PC-3 (cell line): ENCODE measurements at regions of chr13 and their contacts with region 1.

Region 1: DNA sequence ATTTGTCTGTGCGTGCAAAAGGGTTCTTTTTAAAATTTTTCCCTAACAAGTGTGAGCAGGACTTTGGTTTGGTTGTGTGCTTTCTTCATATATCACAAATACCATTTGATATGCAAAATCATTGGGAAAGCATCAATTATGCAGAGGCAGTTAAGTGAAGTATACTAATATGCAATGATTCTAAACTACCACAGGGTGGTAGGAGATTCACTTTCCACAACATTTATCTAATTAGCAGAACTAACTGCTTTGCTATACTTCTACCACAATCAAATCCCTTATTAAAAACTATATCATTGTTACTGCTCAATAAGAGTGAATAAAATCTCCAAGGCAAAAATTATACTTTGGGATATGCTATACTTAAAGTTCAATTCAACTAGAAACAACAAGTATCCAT is 2738.9 kb upstream of the PCDH20 start:
- DNase-seq: peak; percentile 28
- ATAC-seq: no peak
- H3K4me3 ChIP-seq: no peak overlapping the region
- H3K27ac ChIP-seq: no peak overlapping the region
- H3K4me1 ChIP-seq: peaks cover 4% of the 10 kb centered on the region; the same call in 1 of the 2 replicates
- H3K27me3 ChIP-seq: no peaks in the 10 kb centered on the region
- CTCF ChIP-seq: peak; percentile 53

Region 2: GRCh38 chr13:64075543-64076271 is 78.8 kb before region 1 on chr13:
- CTCF ChIA-PET with region 1: no interaction called
- POLR2A ChIA-PET with region 1: no interaction called
- intact Hi-C with region 1: no loop called
- DNase-seq: no peak
- ATAC-seq: no peak
- H3K4me3 ChIP-seq: no peak overlapping the region
- H3K27ac ChIP-seq: no peak overlapping the region
- H3K4me1 ChIP-seq: no peaks in the 10 kb centered on the region
- H3K27me3 ChIP-seq: no peaks in the 10 kb centered on the region
- CTCF ChIP-seq: no peak

Region 3: DNA sequence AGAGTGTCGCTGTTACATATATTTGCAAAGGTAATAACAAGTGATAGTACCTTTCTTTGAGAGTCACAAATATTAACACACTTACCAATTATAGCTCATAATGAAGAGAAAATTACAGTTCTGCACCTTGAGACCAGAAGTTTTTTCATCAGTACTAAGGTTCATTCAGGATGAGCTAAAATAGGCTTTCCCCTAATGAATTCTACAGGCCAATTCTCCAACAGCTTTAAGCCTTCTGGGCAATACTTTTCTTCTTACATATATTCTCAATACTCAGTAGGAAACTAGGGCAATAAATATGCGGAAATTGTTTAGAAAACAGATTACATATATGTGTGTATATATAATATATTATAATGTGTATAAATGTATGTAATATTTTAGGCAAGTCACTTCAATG is 66.0 kb before region 1 on chr13:
- CTCF ChIA-PET with region 1: no interaction called
- POLR2A ChIA-PET with region 1: no interaction called
- intact Hi-C with region 1: no loop called
- DNase-seq: no peak
- ATAC-seq: no peak
- H3K4me3 ChIP-seq: no peak overlapping the region
- H3K27ac ChIP-seq: no peak overlapping the region
- H3K4me1 ChIP-seq: no peaks in the 10 kb centered on the region
- H3K27me3 ChIP-seq: no peaks in the 10 kb centered on the region
- CTCF ChIP-seq: no peak

Region 4: GRCh38 chr13:64263285-64263684 is 108.8 kb after region 1 on chr13:
- CTCF ChIA-PET with region 1: no interaction called
- POLR2A ChIA-PET with region 1: no interaction called
- intact Hi-C with region 1: loop called (anchors 10 kb)
- DNase-seq: no peak
- ATAC-seq: no peak
- H3K4me3 ChIP-seq: no peak overlapping the region
- H3K27ac ChIP-seq: no peak overlapping the region
- H3K4me1 ChIP-seq: no peaks in the 10 kb centered on the region
- H3K27me3 ChIP-seq: no peaks in the 10 kb centered on the region
- CTCF ChIP-seq: no peak

Region 5: GRCh38 chr13:64446372-64446771 is 291.9 kb after region 1 on chr13:
- CTCF ChIA-PET with region 1: no interaction called
- POLR2A ChIA-PET with region 1: no interaction called
- intact Hi-C with region 1: loop called (anchors 10 kb)
- DNase-seq: peak; percentile 42
- ATAC-seq: peak; percentile 64
- H3K4me3 ChIP-seq: no peak overlapping the region
- H3K27ac ChIP-seq: no peak overlapping the region
- H3K4me1 ChIP-seq: no peaks in the 10 kb centered on the region
- H3K27me3 ChIP-seq: no peaks in the 10 kb centered on the region
- CTCF ChIP-seq: peak; percentile 64